ENCODE measurements at regions of chr1 and their contacts with region 1.

Region 1: DNA sequence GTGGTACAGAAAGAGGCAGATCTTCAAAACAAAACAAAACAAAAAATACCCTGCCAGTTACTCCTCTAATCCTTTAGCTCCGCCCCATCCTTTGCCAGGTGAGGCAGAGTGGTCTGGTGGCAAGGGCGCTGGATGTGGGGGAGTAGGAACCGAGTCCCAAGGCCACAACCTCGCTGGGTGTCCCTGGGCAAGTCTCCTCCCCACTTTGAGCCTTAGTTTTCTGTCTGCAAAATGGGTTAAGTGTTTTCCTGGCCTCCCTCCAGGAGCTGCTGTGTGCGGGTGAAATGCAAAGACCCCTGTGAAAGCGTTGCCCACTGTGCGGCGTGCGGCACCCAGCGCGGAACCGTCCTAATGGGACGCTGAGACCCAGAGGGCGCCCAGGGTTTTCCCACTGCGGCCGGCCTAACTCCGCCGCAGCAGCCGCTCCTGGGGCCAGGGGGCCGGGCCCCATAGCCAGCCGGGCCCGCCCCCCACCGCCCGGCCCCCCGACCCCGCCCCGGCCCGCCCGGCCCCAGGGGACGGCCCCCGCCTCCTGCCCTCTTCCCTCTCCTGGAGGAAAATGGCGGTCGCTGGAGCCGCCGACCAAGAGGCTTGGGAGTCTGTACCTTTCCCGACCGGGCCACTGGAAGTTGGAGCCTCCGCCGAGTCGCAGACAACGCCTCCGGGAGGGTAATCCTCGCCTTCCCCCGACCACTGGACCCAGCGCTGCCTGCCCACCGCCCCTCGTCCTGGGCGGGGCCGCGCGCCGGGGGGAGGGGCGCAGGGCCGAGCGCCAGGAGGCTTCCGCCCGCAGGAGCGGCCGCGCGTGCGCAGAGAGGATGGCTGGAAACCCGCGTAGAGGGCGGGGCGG is at the starts of genes ERMAP and SVBP:
- DNase-seq: peak; percentile 92 to 97
- ATAC-seq: peak; percentile 97 to 99 (median 98)
- H3K4me3 ChIP-seq: peak within 1 kb of the TSS; percentile 29 to 92 (median 74)
- H3K27ac ChIP-seq: peak within 1 kb of the TSS; percentile 93 to 100 (median 99)
- H3K4me1 ChIP-seq: peaks cover 0 to 27% (median 23%) of the 10 kb centered on the region in 9 donors
- H3K27me3 ChIP-seq: no peaks in the 10 kb centered on the region
- CTCF ChIP-seq: peak in 1 of 9 donors; percentile 9
- total RNA-seq, gene ERMAP: 2.2 to 6.1 (median 5.0) TPM
- total RNA-seq, gene SVBP: 11.6 to 19.7 (median 13.8) TPM

Region 2: GRCh38 chr1:42846257-42847110 is 29.7 kb after region 1 on chr1 and contains the start of gene ZNF691:
- intact Hi-C with region 1: loop called in 1 of 10 experiments (anchors 2 kb)
- DNase-seq: peak; percentile 88 to 97
- ATAC-seq: peak; percentile 97 to 99 (median 99)
- H3K4me3 ChIP-seq: peak within 1 kb of the TSS; percentile 65 to 97 (median 87)
- H3K27ac ChIP-seq: peak within 1 kb of the TSS; percentile 8 to 97 (median 92)
- H3K4me1 ChIP-seq: peaks cover 5 to 29% (median 19%) of the 10 kb centered on the region in 9 donors
- H3K27me3 ChIP-seq: no peaks in the 10 kb centered on the region
- CTCF ChIP-seq: peak in 8 of 9 donors; percentile 37 to 76 (median 48)
- total RNA-seq, gene ZNF691: 6.0 to 9.2 (median 7.9) TPM